Gastrocnemius medialis (tissue), 4 donors: ENCODE measurements at regions of chr7 and their contacts with region 1.

Region 1: GRCh38 chr7:45917658-45918057 is 3.4 kb downstream of the IGFBP3 start:
- DNase-seq: peak; percentile 46 to 54
- ATAC-seq: peak; percentile 56 to 73
- H3K4me3 ChIP-seq: peak overlapping the region; percentile 27 to 55 (median 50)
- H3K27ac ChIP-seq: no peak overlapping the region
- H3K4me1 ChIP-seq: peaks cover 7 to 26% of the 10 kb centered on the region in 2 donors
- H3K27me3 ChIP-seq: peaks cover 36 to 42% (median 41%) of the 10 kb centered on the region in 3 donors
- CTCF ChIP-seq: peak; percentile 75 to 95 (median 85)
- POLR2A ChIP-seq: no peak

Region 2: DNA sequence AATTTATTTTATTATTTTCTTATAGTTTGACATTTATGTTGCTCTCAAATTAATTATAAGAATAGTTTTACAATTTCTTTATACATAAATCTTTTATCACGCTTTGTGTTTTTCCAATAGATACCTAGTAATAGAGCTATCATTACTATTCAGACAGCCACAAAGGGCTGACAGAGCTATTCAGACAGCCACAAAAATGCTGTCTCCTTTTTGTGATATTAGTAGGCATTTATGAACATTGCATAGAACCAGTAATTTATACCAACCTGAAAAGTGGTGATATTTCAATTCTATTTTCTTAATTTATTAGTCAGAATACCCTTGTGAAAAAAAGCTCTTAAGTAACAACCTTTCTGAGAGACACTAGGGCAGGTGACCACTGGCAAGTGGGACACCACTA is 37.6 kb after region 1 on chr7:
- in situ Hi-C with region 1: no loop called
- intact Hi-C with region 1: no loop called
- DNase-seq: no peak
- ATAC-seq: no peak
- H3K4me3 ChIP-seq: no peak overlapping the region
- H3K27ac ChIP-seq: no peak overlapping the region
- H3K4me1 ChIP-seq: no peaks in the 10 kb centered on the region
- H3K27me3 ChIP-seq: no peaks in the 10 kb centered on the region
- CTCF ChIP-seq: no peak
- POLR2A ChIP-seq: no peak

Region 3: DNA sequence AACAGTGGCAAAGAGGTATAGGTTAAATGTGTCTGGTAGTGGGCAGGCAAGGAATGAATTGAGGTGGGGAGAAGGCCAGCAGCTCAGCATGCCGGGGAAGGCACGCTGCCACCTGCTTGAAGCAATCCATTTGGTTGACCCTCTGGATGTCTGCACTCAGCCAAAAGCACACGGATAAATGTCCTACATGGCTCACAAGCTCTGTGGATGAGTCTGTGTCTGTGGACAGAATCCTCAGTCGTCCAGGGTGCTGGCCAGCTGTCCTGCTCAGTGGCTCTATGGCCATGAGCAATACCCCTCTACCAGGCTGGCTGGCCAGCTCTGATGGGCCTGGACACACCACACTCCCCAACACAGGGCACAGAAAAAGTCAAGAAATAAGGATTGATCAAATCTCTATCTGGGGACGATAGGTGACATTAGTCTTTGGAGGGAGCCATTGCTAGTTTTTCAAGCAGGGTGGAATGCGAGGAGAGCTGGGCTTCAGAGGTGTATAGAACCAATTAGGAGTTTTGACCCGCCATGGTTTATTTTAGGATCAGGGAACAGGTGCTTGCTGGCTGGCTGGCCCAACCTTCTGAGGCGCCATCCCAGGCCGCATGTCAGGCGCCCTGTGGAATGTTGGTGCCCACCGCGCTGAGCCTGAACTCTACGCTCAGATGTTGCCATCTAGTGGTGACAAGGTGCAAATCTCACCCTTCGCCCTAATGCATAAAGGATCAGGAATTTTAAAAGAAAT is 1170.8 kb after region 1 on chr7:
- in situ Hi-C with region 1: loop called (anchors 5 to 10 kb)
- intact Hi-C with region 1: no loop called
- DNase-seq: peak; percentile 23 to 67
- ATAC-seq: peak; percentile 84
- H3K4me3 ChIP-seq: no peak overlapping the region
- H3K27ac ChIP-seq: peak overlapping the region; percentile 26 to 66 (median 47)
- H3K4me1 ChIP-seq: peaks cover 10 to 13% of the 10 kb centered on the region in 2 donors
- H3K27me3 ChIP-seq: no peaks in the 10 kb centered on the region
- CTCF ChIP-seq: peak; percentile 78 to 90 (median 84)
- POLR2A ChIP-seq: no peak

Region 4: DNA sequence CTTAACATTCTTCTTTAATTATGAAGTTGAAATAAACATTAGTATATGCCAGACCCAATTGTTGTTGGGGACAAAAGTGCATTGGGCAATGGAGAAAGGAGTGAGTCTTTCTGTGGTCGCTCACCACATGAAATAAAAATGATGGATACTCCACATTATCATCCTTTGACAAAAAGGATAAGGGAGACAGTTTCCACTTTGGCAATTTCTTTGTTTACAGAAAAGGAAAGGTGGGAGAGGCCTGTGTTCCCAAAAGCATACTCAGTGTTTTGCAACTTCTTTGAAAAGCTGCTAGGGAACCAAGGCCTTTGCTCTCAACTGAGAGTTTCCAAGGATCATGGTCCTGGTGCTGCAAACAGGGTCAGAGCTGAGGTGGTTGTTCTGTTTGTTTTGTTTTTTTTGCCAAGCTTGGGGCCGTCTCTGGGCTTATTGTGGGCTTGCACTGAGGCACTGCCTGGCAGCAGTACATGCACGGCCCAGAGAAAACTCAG is 1322.3 kb after region 1 on chr7:
- in situ Hi-C with region 1: no loop called
- intact Hi-C with region 1: loop called (anchors 5 kb)
- DNase-seq: no peak
- ATAC-seq: peak; percentile 24 to 58
- H3K4me3 ChIP-seq: no peak overlapping the region
- H3K27ac ChIP-seq: no peak overlapping the region
- H3K4me1 ChIP-seq: peaks cover 0 to 23% of the 10 kb centered on the region in 2 donors
- H3K27me3 ChIP-seq: no peaks in the 10 kb centered on the region
- CTCF ChIP-seq: no peak
- POLR2A ChIP-seq: no peak

Region 5: GRCh38 chr7:47254081-47255006 is 1336.7 kb after region 1 on chr7:
- in situ Hi-C with region 1: loop called in 2 of 4 experiments (anchors 5 kb)
- intact Hi-C with region 1: loop called (anchors 2 kb)
- DNase-seq: peak; percentile 85
- ATAC-seq: peak; percentile 81 to 83
- H3K4me3 ChIP-seq: peak overlapping the region; percentile 60 to 70 (median 68)
- H3K27ac ChIP-seq: peak overlapping the region; percentile 90 to 96 (median 94)
- H3K4me1 ChIP-seq: peaks cover 16 to 20% of the 10 kb centered on the region in 2 donors
- H3K27me3 ChIP-seq: no peaks in the 10 kb centered on the region
- CTCF ChIP-seq: peak; percentile 79 to 100 (median 97)
- POLR2A ChIP-seq: peak in 1 of 2 donors; percentile 39